Psoas muscle (tissue), 8 donors: ENCODE measurements at regions of chr7 and their contacts with region 1.

Region 1: DNA sequence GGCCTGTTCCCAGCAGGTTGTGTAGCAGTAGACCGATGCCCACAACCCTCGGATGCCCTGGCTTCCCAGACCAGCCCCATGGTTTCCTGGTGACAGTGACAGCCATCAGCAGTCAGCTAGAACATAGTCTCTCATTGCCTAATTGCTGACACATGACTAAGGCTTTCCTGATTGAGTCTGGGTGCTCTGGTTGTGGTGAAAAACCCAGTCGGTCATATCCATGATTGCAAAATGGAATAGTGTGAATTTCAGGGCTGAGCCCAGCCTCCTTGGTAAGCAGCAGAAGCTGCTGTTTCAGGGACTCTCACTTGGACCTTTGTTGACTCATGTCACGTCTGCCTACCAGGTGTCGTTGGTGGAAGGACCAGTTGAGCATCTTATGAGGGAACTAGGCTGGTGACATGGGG is 36.6 kb downstream of the POR start:
- DNase-seq: peak; percentile 69 to 72
- ATAC-seq: peak; percentile 78 to 86 (median 82)
- H3K4me3 ChIP-seq: no peak overlapping the region
- H3K27ac ChIP-seq: peak overlapping the region; percentile 88
- H3K4me1 ChIP-seq: peaks cover 64% of the 10 kb centered on the region
- H3K27me3 ChIP-seq: no peaks in the 10 kb centered on the region
- CTCF ChIP-seq: no peak

Region 2: DNA sequence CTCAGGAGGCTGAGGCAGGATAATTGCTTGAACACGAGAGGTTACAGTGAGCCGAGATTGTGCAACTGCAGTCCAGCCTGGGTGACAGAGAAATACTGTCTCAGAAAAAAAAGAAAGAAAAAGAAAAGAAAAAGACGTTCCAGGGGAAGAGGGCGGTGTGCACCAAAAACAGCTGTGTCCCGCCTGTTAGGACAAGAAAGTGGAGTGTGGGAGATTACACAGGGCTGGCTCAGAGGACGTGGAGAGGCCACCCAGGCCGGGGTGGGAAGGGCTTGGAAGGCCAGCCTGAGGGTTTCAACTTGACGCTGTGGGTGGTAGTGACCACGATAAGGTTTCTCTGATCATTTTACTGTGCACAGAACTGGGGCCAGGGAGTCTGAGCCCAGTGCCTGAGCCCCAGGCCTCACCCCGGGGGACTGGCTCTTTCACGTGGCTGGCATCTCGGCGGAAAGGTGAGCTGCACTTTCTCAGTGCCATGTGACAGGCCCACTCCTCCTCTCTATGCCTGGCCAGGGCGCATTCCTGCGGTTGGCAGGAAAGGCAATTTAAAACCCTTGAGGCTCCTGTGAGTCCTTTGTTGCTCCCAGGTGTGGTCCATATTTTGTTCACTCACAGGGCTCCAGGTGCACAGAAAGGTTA is 58.8 kb before region 1 on chr7:
- intact Hi-C with region 1: no loop called
- DNase-seq: peak; percentile 66 to 76
- ATAC-seq: peak in 2 of 4 donors; percentile 18 to 47
- H3K4me3 ChIP-seq: no peak overlapping the region
- H3K27ac ChIP-seq: no peak overlapping the region
- H3K4me1 ChIP-seq: peaks cover 5% of the 10 kb centered on the region
- H3K27me3 ChIP-seq: no peaks in the 10 kb centered on the region
- CTCF ChIP-seq: no peak

Region 3: DNA sequence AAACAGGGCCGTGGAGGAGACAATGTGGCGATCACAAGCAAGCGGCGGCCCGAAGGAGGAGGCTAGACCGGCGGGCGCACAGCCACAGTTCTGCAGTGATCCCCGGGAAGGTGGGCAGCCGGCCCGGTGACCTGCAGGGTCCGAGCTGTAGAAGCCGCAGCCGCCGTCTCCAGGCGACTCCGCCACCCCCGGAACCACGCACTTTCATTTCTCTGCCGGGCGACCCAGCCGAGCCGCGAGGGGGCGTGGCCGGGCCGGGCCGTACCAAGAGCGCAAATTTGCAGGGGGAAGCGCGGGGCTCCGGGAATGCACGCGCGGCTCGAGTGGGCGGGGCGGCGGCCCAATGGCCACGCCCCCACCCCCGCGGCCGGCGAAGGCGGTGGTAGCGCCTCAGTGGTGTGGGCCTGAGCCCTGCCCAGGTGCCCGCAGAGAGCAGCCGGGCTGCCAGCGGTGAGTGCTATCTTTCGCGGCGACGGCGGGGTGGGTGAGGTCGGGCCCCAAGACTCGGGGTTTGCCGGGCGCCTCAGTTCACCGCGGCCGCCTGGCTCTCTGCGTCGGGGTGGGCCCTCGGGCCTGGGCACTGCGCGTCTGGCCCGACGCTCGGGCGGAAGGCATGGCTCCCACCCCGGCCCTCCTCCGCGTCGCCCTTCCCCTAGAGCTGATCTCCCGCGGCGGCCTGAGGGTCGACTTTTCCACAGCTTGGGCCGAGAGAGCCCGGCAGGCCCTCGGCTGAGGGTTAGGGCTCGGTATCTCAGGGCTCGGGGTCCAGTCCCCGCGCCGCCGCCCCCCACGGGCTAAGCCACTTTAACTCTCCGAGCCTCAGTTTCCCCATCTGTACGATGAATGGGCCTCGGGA is 36.6 kb before region 1 on chr7 and contains the start of gene POR:
- intact Hi-C with region 1: no loop called
- DNase-seq: peak; percentile 96 to 97
- ATAC-seq: peak; percentile 97 to 100 (median 98)
- H3K4me3 ChIP-seq: peak within 1 kb of the TSS; percentile 98
- H3K27ac ChIP-seq: peak within 1 kb of the TSS; percentile 83
- H3K4me1 ChIP-seq: peaks cover 30% of the 10 kb centered on the region
- H3K27me3 ChIP-seq: no peaks in the 10 kb centered on the region
- CTCF ChIP-seq: peak; percentile 19
- total RNA-seq, gene POR: 48.8 to 206 (median 117) TPM

Region 4: DNA sequence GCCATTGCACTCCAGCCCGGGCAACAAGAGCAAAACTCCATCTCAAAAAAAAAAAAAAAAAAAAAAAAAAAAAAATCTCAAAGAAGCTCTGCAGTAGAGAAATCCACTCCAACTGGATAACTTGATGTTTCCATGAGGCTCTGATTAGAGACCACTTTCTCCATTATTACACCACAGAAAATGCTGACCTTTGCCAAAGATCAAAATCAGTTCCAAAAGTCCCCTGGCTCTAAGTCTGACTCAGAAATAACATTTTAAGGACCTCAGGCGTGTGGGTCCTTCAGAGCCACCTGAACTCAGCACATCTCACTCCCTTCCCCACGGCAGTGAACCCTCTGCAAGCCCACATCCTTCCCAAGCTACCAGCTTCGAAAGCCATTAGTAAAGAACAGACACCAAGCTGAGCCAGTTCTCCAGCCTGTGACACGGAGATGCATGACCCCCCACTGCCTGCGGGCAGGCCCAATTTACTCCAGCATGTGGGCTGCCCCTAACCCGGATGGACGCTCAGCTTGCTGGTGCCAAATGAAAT is 56.7 kb after region 1 on chr7:
- intact Hi-C with region 1: loop called in 1 of 2 experiments (anchors 10 kb)
- DNase-seq: no peak
- ATAC-seq: no peak
- H3K4me3 ChIP-seq: no peak overlapping the region
- H3K27ac ChIP-seq: no peak overlapping the region
- H3K4me1 ChIP-seq: peaks cover 22% of the 10 kb centered on the region
- H3K27me3 ChIP-seq: no peaks in the 10 kb centered on the region
- CTCF ChIP-seq: no peak

Region 5: GRCh38 chr7:76069238-76069638 is 117.7 kb after region 1 on chr7:
- intact Hi-C with region 1: no loop called
- DNase-seq: peak; percentile 63 to 89
- ATAC-seq: peak; percentile 83 to 95 (median 90)
- H3K4me3 ChIP-seq: no peak overlapping the region
- H3K27ac ChIP-seq: peak overlapping the region; percentile 60
- H3K4me1 ChIP-seq: peaks cover 5% of the 10 kb centered on the region
- H3K27me3 ChIP-seq: no peaks in the 10 kb centered on the region
- CTCF ChIP-seq: peak; percentile 31